Gastrocnemius medialis (tissue), 4 donors: ENCODE measurements at regions of chr20 and their contacts with region 1.

Region 1: DNA sequence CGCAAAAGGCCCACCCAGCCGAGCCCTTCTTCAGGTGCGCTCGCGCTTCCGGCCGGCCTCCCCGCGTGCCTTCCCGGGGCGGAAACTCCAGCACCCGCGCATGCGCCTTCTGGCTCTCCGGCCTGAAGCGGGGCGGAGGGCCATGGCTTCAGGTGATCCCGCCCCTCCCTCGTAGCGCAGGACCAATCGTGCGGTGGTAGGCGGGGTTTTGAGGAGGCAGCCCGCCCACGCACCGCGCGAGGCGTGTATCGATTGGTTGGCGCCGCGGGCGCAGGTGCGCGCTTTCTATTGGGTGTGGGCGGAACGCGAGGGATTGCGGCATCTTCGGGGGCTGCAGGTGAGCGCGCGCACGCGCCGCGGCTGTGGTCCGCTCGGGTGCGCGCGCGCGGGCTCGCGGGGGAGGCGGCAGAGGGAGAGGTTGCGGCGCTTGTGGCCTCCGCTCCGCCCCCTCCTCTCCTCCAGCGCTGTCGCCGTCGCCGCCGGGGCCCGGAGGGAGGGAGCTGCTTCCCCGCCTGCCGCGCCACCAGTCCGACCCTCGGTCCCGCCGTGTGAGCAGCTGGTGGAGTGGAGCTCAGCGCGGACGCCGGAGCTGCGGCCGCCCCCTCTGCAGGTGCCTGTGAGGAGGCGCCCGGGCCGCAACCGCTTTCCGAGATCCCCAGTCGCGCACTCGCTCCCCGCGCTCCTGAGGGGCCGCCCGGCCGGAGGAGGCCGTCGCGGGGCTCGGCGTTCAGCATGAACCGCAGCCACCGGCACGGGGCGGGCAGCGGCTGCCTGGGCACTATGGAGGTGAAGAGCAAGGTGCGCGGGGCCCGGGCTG is at the start of gene PARD6B:
- DNase-seq: peak; percentile 96 to 98
- ATAC-seq: peak; percentile 92 to 94
- H3K4me3 ChIP-seq: peak within 1 kb of the TSS; percentile 66 to 93 (median 72)
- H3K27ac ChIP-seq: peak within 1 kb of the TSS; percentile 82 to 92 (median 84)
- H3K4me1 ChIP-seq: peaks cover 14 to 25% of the 10 kb centered on the region in 2 donors
- H3K27me3 ChIP-seq: no peaks in the 10 kb centered on the region
- CTCF ChIP-seq: peak in 1 of 5 experiments; percentile 7
- POLR2A ChIP-seq: peak; percentile 77 to 78
- total RNA-seq, gene PARD6B: 0.72 to 15.3 (median 2.3) TPM

Region 2: DNA sequence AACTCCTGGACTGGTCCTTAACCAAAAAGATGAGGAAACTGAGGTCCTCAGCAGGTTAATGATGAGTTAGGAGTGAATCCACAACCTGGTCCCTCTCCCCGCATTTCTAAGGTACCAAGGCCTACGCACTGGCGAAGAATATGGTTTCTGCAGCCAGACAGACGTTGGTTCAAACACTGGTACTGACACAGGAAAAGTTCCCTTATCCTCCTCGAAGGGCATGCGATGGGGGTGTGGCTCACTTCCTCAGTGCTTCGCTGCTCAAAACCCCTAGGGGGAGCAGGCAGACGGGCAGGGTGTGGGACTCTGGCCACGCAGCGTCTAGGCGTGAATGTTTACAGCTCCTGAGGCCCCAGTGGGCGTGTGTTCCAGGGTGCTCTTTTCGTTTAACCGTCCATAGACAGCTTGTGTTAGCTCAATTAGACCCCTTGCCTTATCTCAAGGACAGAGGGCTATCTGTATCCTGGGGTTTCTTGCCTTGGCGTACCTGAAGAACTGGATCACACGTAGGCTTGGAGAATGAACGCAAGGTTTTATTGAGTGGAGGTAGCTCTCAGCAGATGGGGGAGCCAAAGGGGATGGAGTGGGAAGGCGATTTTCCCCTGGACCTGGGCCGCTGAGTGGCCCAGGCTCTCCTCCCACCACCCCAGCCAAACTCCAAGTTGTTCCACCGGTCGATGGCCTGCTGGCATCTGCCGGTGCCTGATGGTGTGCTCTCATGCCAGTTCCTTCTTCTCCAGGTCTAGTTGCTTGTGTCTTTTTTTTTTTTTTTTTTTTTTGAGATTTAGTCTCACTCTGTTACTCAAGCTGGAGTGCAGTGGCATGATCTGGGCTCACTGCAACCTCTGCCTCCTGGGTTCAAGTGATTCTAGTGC is 252.9 kb before region 1 on chr20:
- in situ Hi-C with region 1: loop called in 1 of 4 experiments (anchors 25 kb)
- intact Hi-C with region 1: no loop called
- DNase-seq: peak; percentile 32 to 56
- ATAC-seq: peak in 1 of 2 donors; percentile 38
- H3K4me3 ChIP-seq: no peak overlapping the region
- H3K27ac ChIP-seq: no peak overlapping the region
- H3K4me1 ChIP-seq: peaks cover 5 to 6% of the 10 kb centered on the region in 2 donors
- H3K27me3 ChIP-seq: no peaks in the 10 kb centered on the region
- CTCF ChIP-seq: peak; percentile 32 to 49 (median 45)
- POLR2A ChIP-seq: no peak

Region 3: DNA sequence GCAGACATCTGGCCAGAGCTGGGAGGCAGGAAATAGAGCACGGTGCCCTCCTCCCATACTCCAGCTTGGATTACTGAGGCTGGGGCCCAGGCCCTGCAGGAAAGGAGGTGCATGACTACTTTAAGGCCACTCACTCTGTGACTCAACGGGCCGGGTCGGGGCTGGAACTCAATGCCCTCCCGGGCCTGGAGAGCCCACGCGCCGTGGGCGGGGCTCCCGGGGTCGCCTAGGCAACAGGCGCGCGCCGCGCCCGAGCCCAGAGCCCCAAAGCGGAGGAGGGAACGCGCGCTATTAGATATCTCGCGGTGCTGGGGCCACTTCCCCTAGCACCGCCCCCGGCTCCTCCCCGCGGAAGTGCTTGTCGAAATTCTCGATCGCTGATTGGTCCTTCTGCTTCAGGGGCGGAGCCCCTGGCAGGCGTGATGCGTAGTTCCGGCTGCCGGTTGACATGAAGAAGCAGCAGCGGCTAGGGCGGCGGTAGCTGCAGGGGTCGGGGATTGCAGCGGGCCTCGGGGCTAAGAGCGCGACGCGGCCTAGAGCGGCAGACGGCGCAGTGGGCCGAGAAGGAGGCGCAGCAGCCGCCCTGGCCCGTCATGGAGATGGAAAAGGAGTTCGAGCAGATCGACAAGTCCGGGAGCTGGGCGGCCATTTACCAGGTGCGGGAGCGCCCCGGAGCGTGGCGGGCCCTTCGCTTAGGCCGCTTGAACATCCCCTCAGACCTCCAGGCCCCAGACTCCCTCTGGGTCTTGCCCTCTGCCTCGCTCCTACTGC is 221.1 kb before region 1 on chr20 and contains the start of gene PTPN1:
- in situ Hi-C with region 1: no loop called
- intact Hi-C with region 1: loop called (anchors 10 kb)
- DNase-seq: peak; percentile 98
- ATAC-seq: peak; percentile 90 to 97
- H3K4me3 ChIP-seq: peak within 1 kb of the TSS; percentile 90 to 100 (median 94)
- H3K27ac ChIP-seq: peak within 1 kb of the TSS; percentile 92 to 99 (median 96)
- H3K4me1 ChIP-seq: peaks cover 42 to 44% of the 10 kb centered on the region in 2 donors
- H3K27me3 ChIP-seq: no peaks in the 10 kb centered on the region
- CTCF ChIP-seq: peak in 2 of 5 experiments; percentile 11 to 25
- POLR2A ChIP-seq: peak; percentile 99
- total RNA-seq, gene PTPN1: 21.8 to 46.8 (median 44.4) TPM

Region 4: DNA sequence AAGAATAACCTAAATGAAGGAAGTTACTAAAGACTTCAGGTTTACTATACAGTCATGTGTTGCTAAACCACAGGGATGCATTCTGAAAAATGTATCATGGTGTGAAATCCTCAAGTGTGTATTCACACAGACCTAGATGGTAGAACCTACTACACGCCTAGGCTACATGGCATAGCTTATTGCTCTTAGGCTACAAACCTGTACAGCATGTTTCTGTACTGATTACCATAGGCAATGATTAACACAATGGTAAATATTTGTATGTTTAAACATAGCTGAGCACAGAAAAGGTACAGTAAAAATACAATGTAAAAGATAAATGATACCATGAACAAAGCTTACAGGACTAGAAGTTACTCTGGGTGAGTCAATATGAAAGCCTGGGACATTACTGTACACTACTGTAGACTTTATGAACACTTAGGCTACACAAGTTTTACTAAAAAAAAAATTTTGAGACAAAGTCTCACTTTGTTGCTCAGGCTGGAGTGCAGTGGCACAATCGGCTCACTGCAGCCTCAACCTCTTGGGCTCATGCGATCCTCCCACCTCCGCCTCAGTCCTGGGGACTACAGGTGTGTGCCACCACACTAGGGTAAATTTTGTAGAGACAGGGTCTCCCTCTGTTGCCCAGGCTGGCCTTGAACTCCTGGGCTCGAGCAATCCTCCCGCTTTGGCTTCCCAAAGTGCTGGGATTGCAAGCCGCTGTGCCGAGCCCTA is 164.0 kb after region 1 on chr20:
- in situ Hi-C with region 1: no loop called
- intact Hi-C with region 1: no loop called
- DNase-seq: no peak
- ATAC-seq: no peak
- H3K4me3 ChIP-seq: no peak overlapping the region
- H3K27ac ChIP-seq: no peak overlapping the region
- H3K4me1 ChIP-seq: no peaks in the 10 kb centered on the region
- H3K27me3 ChIP-seq: no peaks in the 10 kb centered on the region
- CTCF ChIP-seq: no peak
- POLR2A ChIP-seq: no peak